AG04450 (cell line): ENCODE measurements at regions of chrX and their contacts with region 1.

Region 1: GRCh38 chrX:3811331-3812311 is 98.2 kb upstream of the PRKX start:
- DNase-seq: no peak
- H3K4me3 ChIP-seq: no peak overlapping the region
- H3K27ac ChIP-seq: no peak overlapping the region
- H3K27me3 ChIP-seq: peaks cover 4% of the 10 kb centered on the region
- CTCF ChIP-seq: peak; percentile 61

Region 2: GRCh38 chrX:3651276-3651675 is 160.3 kb before region 1 on chrX:
- CTCF ChIA-PET with region 1: interaction called, 28 read pairs
- POLR2A ChIA-PET with region 1: no interaction called
- DNase-seq: no peak
- H3K4me3 ChIP-seq: no peak overlapping the region
- H3K27ac ChIP-seq: no peak overlapping the region
- H3K27me3 ChIP-seq: no peaks in the 10 kb centered on the region
- CTCF ChIP-seq: peak; percentile 44